Heart left ventricle (tissue), 16 donors: ENCODE measurements at regions of chr7 and their contacts with region 1.

Region 1: DNA sequence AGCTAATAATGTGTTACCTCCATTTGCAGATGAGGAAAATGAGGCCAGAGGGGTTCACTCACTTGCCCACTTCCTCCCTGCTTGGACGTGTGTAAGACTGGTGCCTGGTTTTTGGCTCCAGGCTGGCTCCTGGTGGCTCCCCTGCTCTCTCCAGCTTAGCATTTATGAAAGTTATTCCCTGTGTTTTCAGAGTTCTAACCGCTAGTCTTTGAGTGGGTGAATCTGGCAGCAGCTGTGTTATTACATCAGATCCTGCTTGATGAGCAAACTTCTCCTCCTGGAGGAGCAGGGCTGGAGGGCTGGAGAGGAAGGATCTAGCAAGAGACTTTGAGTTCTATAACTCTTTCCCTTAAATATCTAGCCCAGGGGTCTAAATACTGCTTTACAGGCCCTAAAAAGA is 80.9 kb upstream of the AGBL3 start:
- DNase-seq: peak in 4 of 5 donors; percentile 56 to 77 (median 68)
- ATAC-seq: peak; percentile 21 to 87 (median 76)
- H3K4me3 ChIP-seq: no peak overlapping the region
- H3K27ac ChIP-seq: peak overlapping the region in 11 of 12 donors; percentile 30 to 72 (median 45)
- H3K4me1 ChIP-seq: peaks cover 4 to 93% (median 57%) of the 10 kb centered on the region in 12 donors
- H3K27me3 ChIP-seq: no peaks in the 10 kb centered on the region
- CTCF ChIP-seq: peak in 5 of 12 donors; percentile 6 to 38 (median 24)
- POLR2A ChIP-seq: no peak

Region 2: DNA sequence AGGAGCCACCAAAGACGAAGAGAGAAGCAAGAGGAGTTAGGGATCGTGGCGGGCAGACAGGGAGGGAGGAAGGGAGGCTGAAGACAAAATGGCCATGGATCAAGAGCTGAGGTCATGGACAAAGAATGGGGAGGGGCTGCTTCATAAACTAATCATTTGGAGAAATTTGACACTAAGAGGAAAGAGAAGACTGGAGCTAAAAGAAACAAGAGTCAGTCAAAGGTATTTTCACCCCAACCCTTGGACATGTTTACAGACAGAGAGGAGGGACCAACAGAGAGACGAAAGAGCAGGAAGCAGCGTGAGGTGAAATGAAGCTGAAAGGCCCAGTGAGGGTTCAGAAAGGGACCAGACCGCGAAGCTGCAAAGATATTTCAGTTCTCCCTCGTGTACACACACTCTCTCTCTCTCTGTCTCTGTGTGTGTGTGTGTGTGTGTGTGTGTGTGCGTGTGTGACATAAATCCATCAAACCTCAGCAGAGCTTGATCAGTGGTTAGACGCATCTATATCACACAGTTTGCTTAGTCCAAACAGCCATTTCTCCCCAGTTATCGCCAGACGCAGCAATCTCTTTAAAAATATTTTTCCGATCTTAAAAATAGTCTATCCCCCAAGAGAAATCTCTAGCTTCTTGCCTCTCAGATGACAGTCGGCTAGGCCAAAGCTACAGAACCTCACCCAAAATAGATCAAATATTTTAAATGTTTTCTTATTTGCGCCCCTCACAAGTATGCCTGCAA is 138.4 kb before region 1 on chr7:
- intact Hi-C with region 1: loop called in 1 of 10 experiments (anchors 10 kb)
- DNase-seq: peak in 2 of 5 donors; percentile 29 to 36
- ATAC-seq: peak; percentile 16 to 66 (median 53)
- H3K4me3 ChIP-seq: peak overlapping the region in 1 of 12 donors; percentile 2
- H3K27ac ChIP-seq: peak overlapping the region; percentile 52 to 86 (median 68)
- H3K4me1 ChIP-seq: peaks cover 0 to 30% (median 2%) of the 10 kb centered on the region in 12 donors
- H3K27me3 ChIP-seq: no peaks in the 10 kb centered on the region
- CTCF ChIP-seq: no peak
- POLR2A ChIP-seq: no peak

Region 3: DNA sequence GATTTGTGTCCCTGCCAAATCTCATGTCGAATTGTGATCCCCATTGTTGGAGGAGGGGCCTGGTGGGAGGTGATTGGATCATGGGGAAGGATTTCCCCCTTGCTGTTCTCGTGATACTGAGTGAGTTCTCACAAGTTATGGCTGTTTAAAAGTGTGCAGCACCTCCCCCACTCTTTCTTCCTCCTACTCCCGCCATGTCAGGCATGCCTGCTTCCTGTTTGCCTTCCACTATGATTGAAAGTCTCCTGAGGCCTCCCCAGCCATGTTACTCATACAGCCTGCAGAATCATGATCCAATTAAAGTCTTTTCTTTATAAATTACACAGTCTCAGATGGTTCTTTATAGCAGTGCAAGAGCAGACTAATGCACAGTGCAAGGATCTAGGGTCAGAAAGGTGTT is 50.6 kb before region 1 on chr7:
- intact Hi-C with region 1: no loop called
- DNase-seq: peak in 3 of 5 donors; percentile 37 to 47 (median 41)
- ATAC-seq: peak in 3 of 4 donors; percentile 38 to 65 (median 62)
- H3K4me3 ChIP-seq: no peak overlapping the region
- H3K27ac ChIP-seq: peak overlapping the region in 8 of 12 donors; percentile 1 to 75 (median 64)
- H3K4me1 ChIP-seq: peaks cover 4 to 73% (median 42%) of the 10 kb centered on the region in 12 donors
- H3K27me3 ChIP-seq: no peaks in the 10 kb centered on the region
- CTCF ChIP-seq: no peak
- POLR2A ChIP-seq: no peak

Region 4: DNA sequence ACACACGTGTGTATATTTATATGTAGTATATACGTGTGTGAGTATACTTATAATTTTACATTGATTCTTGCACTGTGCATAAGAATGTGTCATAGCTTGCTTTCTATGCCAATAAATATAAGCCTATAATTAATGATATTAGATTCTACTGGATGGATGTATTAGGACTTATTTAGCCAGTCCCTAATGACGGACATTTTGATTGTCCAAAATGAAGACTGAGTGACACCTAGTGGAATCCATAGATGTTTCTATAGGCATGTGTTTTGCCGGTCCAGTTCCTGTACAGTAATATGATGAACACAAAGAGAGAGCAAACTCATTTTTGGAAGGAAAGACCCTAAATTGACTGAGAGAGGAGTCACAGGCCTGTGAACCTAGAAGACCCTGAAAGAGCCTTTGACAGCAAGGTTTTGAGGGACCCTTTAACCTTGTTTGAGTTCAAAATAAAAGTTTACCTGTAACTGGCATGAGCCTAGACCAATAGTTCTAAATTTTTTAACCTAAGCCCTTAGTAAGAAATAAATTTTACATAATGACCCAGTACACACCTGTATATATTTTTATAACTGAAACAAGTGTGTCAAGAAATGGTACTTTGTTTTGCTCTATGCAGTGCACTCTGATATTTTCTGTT is 38.5 kb after region 1 on chr7:
- intact Hi-C with region 1: no loop called
- DNase-seq: no peak
- ATAC-seq: peak in 3 of 4 donors; percentile 44 to 53 (median 49)
- H3K4me3 ChIP-seq: no peak overlapping the region
- H3K27ac ChIP-seq: peak overlapping the region in 1 of 12 donors; percentile 7
- H3K4me1 ChIP-seq: peaks cover 0 to 21% (median 8%) of the 10 kb centered on the region in 12 donors
- H3K27me3 ChIP-seq: no peaks in the 10 kb centered on the region
- CTCF ChIP-seq: peak in 11 of 12 donors; percentile 12 to 65 (median 43)
- POLR2A ChIP-seq: no peak